ENCODE measurements at regions of chr16 and their contacts with region 1.

Region 1: GRCh38 chr16:53054670-53055485 is at the start of gene CHD9:
- DNase-seq: peak; percentile 85 to 93 (median 87)
- ATAC-seq: peak; percentile 81 to 94 (median 92)
- H3K4me3 ChIP-seq: peak within 1 kb of the TSS; percentile 38 to 93 (median 78)
- H3K27ac ChIP-seq: peak within 1 kb of the TSS; percentile 81 to 96 (median 91)
- H3K4me1 ChIP-seq: peaks cover 0 to 45% (median 29%) of the 10 kb centered on the region in 12 donors
- H3K27me3 ChIP-seq: no peaks in the 10 kb centered on the region
- CTCF ChIP-seq: peak; percentile 99 to 100 (median 100)
- POLR2A ChIP-seq: peak in 1 of 2 donors; percentile 27
- total RNA-seq, gene CHD9: 37.9 to 56.2 (median 44.1) TPM

Region 2: GRCh38 chr16:53065461-53066061 is 10.7 kb after region 1 on chr16:
- intact Hi-C with region 1: loop called in 1 of 10 experiments (anchors 1 kb)
- DNase-seq: peak in 2 of 5 donors; percentile 30 to 53
- ATAC-seq: peak; percentile 44 to 84 (median 76)
- H3K4me3 ChIP-seq: peak overlapping the region in 1 of 12 donors; percentile 1
- H3K27ac ChIP-seq: peak overlapping the region; percentile 39 to 82 (median 76)
- H3K4me1 ChIP-seq: peaks cover 5 to 90% (median 44%) of the 10 kb centered on the region in 12 donors
- H3K27me3 ChIP-seq: no peaks in the 10 kb centered on the region
- CTCF ChIP-seq: no peak
- POLR2A ChIP-seq: no peak

Region 3: GRCh38 chr16:53099318-53100130 is 44.6 kb after region 1 on chr16:
- intact Hi-C with region 1: loop called (anchors 1 to 10 kb)
- DNase-seq: peak; percentile 93 to 98 (median 95)
- ATAC-seq: peak; percentile 89 to 95 (median 92)
- H3K4me3 ChIP-seq: peak overlapping the region in 11 of 12 donors; percentile 14 to 59 (median 45)
- H3K27ac ChIP-seq: peak overlapping the region; percentile 88 to 98 (median 94)
- H3K4me1 ChIP-seq: peaks cover 16 to 63% (median 59%) of the 10 kb centered on the region in 12 donors
- H3K27me3 ChIP-seq: no peaks in the 10 kb centered on the region
- CTCF ChIP-seq: no peak
- POLR2A ChIP-seq: peak in 1 of 2 donors; percentile 10

Region 4: GRCh38 chr16:53159781-53160436 is 105.0 kb after region 1 on chr16:
- intact Hi-C with region 1: loop called in 6 of 10 experiments (anchors 2 to 5 kb)
- DNase-seq: no peak
- ATAC-seq: peak in 3 of 4 donors; percentile 68 to 78 (median 75)
- H3K4me3 ChIP-seq: no peak overlapping the region
- H3K27ac ChIP-seq: no peak overlapping the region
- H3K4me1 ChIP-seq: peaks cover 0 to 14% (median 5%) of the 10 kb centered on the region in 12 donors
- H3K27me3 ChIP-seq: no peaks in the 10 kb centered on the region
- CTCF ChIP-seq: peak; percentile 55 to 85 (median 70)
- POLR2A ChIP-seq: no peak

Region 5: GRCh38 chr16:53220585-53220984 is 165.7 kb after region 1 on chr16:
- intact Hi-C with region 1: loop called in 1 of 10 experiments (anchors 5 kb)
- DNase-seq: no peak
- ATAC-seq: peak in 3 of 4 donors; percentile 47 to 66 (median 65)
- H3K4me3 ChIP-seq: peak overlapping the region in 1 of 12 donors; percentile 9
- H3K27ac ChIP-seq: peak overlapping the region; percentile 20 to 86 (median 69)
- H3K4me1 ChIP-seq: peaks cover 23 to 80% (median 64%) of the 10 kb centered on the region in 12 donors
- H3K27me3 ChIP-seq: no peaks in the 10 kb centered on the region
- CTCF ChIP-seq: peak in 10 of 12 donors; percentile 4 to 56 (median 28)
- POLR2A ChIP-seq: no peak

Region 6: GRCh38 chr16:53372992-53373871 is 318.4 kb after region 1 on chr16:
- intact Hi-C with region 1: no loop called
- DNase-seq: peak in 2 of 5 donors; percentile 36 to 69
- ATAC-seq: peak in 3 of 4 donors; percentile 36 to 68 (median 54)
- H3K4me3 ChIP-seq: peak overlapping the region in 10 of 12 donors; percentile 1 to 52 (median 23)
- H3K27ac ChIP-seq: no peak overlapping the region
- H3K4me1 ChIP-seq: peaks cover 0 to 22% (median 0%) of the 10 kb centered on the region in 12 donors
- H3K27me3 ChIP-seq: peaks cover 12 to 58% (median 20%) of the 10 kb centered on the region in 9 donors
- CTCF ChIP-seq: no peak
- POLR2A ChIP-seq: no peak

Region 7: GRCh38 chr16:53503270-53503923 is 448.5 kb after region 1 on chr16:
- intact Hi-C with region 1: loop called in 1 of 10 experiments (anchors 10 kb)
- DNase-seq: peak; percentile 100
- ATAC-seq: peak; percentile 91 to 96 (median 94)
- H3K4me3 ChIP-seq: peak overlapping the region; percentile 69 to 97 (median 94)
- H3K27ac ChIP-seq: peak overlapping the region; percentile 91 to 98 (median 96)
- H3K4me1 ChIP-seq: peaks cover 5 to 44% (median 32%) of the 10 kb centered on the region in 12 donors
- H3K27me3 ChIP-seq: no peaks in the 10 kb centered on the region
- CTCF ChIP-seq: no peak
- POLR2A ChIP-seq: peak; percentile 23 to 95